GM12878 (cell line): ENCODE measurements at regions of chr12 and their contacts with region 1.

Region 1: DNA sequence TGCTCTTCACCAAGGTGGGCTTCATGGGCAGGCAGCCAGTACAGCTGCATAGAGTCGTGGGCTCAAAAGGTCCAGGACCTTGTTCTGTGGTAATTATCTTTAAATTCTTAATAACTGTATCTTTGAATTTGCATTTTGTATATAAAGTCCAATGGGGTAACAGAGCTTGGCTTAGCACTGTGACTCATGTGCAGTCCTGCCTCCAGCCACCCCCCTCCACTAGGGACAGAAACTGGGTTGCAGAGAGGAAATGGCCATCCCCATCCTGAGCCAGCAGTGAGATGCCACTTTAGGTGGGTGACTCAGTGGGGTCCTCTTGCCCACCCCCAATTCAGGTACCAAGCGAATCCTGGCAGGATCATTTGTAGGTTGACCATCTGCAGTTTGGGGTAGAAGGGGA is 48.1 kb downstream of the EPS8 start:
- DNase-seq: no peak
- ATAC-seq: peak; percentile 44; the same call in 2 of the 3 replicates
- H3K4me3 ChIP-seq: no peak overlapping the region
- H3K27ac ChIP-seq: no peak overlapping the region
- H3K4me1 ChIP-seq: no peaks in the 10 kb centered on the region
- H3K27me3 ChIP-seq: no peaks in the 10 kb centered on the region
- CTCF ChIP-seq: no peak
- EP300 ChIP-seq: no peak
- POLR2A ChIP-seq: no peak
- RAD21 ChIP-seq: no peak

Region 2: DNA sequence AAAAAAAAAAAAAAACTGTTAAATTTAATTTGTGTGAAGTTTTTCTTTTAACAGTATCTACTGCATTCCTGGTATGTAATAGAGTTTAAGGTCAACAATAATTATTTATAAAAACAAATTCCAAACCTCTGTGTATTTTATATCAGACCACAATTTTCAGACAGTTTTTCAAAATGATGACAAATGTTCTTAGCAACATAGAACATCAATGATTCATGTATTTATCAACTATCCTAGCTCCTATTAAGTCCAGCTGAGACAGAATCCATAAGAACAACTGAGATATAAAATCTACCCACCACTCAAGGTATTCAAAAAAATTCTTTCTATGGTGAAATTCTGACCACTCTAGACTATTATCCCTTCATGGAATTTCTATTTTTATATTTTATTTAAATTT is 96.4 kb before region 1 on chr12:
- CTCF ChIA-PET with region 1: no interaction called
- POLR2A ChIA-PET with region 1: no interaction called
- RAD21 ChIA-PET with region 1: no interaction called
- SMC1A ChIA-PET with region 1: no interaction called
- in situ Hi-C with region 1: no loop called
- intact Hi-C with region 1: no loop called
- DNase-seq: no peak
- ATAC-seq: no peak
- H3K4me3 ChIP-seq: no peak overlapping the region
- H3K27ac ChIP-seq: no peak overlapping the region
- H3K4me1 ChIP-seq: no peaks in the 10 kb centered on the region
- H3K27me3 ChIP-seq: no peaks in the 10 kb centered on the region
- CTCF ChIP-seq: no peak
- EP300 ChIP-seq: no peak
- POLR2A ChIP-seq: no peak
- RAD21 ChIP-seq: no peak

Region 3: GRCh38 chr12:15751741-15752140 is 10.7 kb after region 1 on chr12:
- CTCF ChIA-PET with region 1: interaction called, 33 read pairs
- POLR2A ChIA-PET with region 1: interaction called, 28 read pairs
- RAD21 ChIA-PET with region 1: interaction called, 19 read pairs
- SMC1A ChIA-PET with region 1: interaction called, 198 read pairs
- in situ Hi-C with region 1: no loop called
- intact Hi-C with region 1: no loop called
- DNase-seq: no peak
- ATAC-seq: no peak
- H3K4me3 ChIP-seq: no peak overlapping the region
- H3K27ac ChIP-seq: no peak overlapping the region
- H3K4me1 ChIP-seq: no peaks in the 10 kb centered on the region
- H3K27me3 ChIP-seq: no peaks in the 10 kb centered on the region
- CTCF ChIP-seq: no peak
- EP300 ChIP-seq: no peak
- POLR2A ChIP-seq: no peak
- RAD21 ChIP-seq: no peak

Region 4: GRCh38 chr12:15757553-15758265 is 16.6 kb after region 1 on chr12:
- CTCF ChIA-PET with region 1: interaction called, 33 read pairs
- POLR2A ChIA-PET with region 1: interaction called, 28 read pairs
- RAD21 ChIA-PET with region 1: interaction called, 9 read pairs
- SMC1A ChIA-PET with region 1: interaction called, 198 read pairs
- in situ Hi-C with region 1: no loop called
- intact Hi-C with region 1: no loop called
- DNase-seq: no peak
- ATAC-seq: peak; percentile 83
- H3K4me3 ChIP-seq: no peak overlapping the region
- H3K27ac ChIP-seq: no peak overlapping the region
- H3K4me1 ChIP-seq: no peaks in the 10 kb centered on the region
- H3K27me3 ChIP-seq: no peaks in the 10 kb centered on the region
- CTCF ChIP-seq: no peak
- EP300 ChIP-seq: no peak
- POLR2A ChIP-seq: no peak
- RAD21 ChIP-seq: no peak